ENCODE measurements at regions of chr18 and their contacts with region 1.

Region 1: DNA sequence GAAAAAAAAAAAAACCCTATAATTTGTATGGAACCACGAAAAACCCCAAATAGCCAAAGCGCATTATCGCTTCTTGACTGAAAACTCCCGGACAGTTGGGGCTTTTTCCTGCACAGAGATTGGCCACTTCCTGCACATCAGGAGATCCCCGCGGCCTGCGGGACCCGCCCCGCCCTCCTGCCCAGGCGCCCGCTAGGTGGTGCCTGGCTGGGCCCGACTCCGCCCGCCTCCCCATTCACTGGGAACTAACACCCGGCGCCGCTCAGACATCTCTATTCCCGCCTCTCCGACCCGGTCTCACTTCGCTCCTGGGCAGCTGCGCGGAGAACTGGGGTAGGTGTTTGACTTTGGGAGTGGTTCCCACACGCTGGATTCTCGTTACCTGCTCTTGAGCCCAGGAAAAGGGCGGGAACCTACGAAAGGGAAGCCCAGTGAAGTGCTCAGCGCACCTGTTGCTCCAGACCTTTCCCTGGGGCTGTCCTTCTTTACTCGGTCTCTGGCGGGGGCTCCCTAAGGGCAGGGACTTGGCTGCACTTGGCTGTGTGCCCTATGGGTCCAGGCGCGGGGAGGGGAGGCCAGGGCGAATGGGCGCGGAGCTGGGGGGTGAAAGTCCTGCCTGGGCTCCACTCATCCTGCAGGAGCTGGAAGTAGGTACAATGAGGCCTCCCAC is at the start of gene HMSD:
- DNase-seq: peak; percentile 87
- ATAC-seq: peak; percentile 87
- H3K4me3 Mint-ChIP-seq: peak within 1 kb of the TSS; percentile 77
- H3K27ac Mint-ChIP-seq: peak within 1 kb of the TSS; percentile 86
- H3K4me1 Mint-ChIP-seq: peaks cover 43% of the 10 kb centered on the region
- H3K27me3 Mint-ChIP-seq: peaks cover 27% of the 10 kb centered on the region
- total RNA-seq, gene HMSD: 18.8 to 26.7 TPM

Region 2: GRCh38 chr18:63409301-63409700 is 539.9 kb before region 1 on chr18:
- CTCF ChIA-PET with region 1: no interaction called
- POLR2A ChIA-PET with region 1: no interaction called
- intact Hi-C with region 1: no loop called
- DNase-seq: peak; percentile 19
- ATAC-seq: peak; percentile 57
- H3K4me3 Mint-ChIP-seq: no peak overlapping the region
- H3K27ac Mint-ChIP-seq: peak overlapping the region; percentile 65
- H3K4me1 Mint-ChIP-seq: peaks cover 42% of the 10 kb centered on the region
- H3K27me3 Mint-ChIP-seq: no peaks in the 10 kb centered on the region

Region 3: DNA sequence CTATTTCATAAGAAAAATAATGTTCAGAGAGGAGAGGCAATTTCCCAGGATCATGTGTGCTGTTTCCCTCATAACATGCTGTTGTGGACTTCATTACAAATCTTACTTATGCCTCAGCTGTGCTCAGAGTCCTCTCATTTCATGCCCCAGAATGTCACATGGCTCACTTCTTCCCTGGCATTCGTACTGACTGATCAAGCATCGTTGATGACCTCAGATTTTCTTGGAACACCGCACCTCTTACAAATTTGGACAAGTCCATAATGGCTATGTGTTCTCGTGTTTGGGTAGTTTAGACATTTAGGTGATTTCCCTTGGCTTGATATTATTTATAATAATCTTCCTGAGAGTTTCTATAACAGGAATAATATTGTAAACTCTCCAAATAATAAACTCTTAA is 141.1 kb before region 1 on chr18:
- CTCF ChIA-PET with region 1: no interaction called
- POLR2A ChIA-PET with region 1: no interaction called
- intact Hi-C with region 1: no loop called
- DNase-seq: no peak
- ATAC-seq: no peak
- H3K4me3 Mint-ChIP-seq: no peak overlapping the region
- H3K27ac Mint-ChIP-seq: no peak overlapping the region
- H3K4me1 Mint-ChIP-seq: no peaks in the 10 kb centered on the region
- H3K27me3 Mint-ChIP-seq: peaks cover 12% of the 10 kb centered on the region

Region 4: GRCh38 chr18:63831080-63831788 is 118.0 kb before region 1 on chr18:
- CTCF ChIA-PET with region 1: no interaction called
- POLR2A ChIA-PET with region 1: no interaction called
- intact Hi-C with region 1: loop called (anchors 1 to 2 kb)
- DNase-seq: no peak
- ATAC-seq: no peak
- H3K4me3 Mint-ChIP-seq: no peak overlapping the region
- H3K27ac Mint-ChIP-seq: no peak overlapping the region
- H3K4me1 Mint-ChIP-seq: no peaks in the 10 kb centered on the region
- H3K27me3 Mint-ChIP-seq: peaks cover 23% of the 10 kb centered on the region

Region 5: DNA sequence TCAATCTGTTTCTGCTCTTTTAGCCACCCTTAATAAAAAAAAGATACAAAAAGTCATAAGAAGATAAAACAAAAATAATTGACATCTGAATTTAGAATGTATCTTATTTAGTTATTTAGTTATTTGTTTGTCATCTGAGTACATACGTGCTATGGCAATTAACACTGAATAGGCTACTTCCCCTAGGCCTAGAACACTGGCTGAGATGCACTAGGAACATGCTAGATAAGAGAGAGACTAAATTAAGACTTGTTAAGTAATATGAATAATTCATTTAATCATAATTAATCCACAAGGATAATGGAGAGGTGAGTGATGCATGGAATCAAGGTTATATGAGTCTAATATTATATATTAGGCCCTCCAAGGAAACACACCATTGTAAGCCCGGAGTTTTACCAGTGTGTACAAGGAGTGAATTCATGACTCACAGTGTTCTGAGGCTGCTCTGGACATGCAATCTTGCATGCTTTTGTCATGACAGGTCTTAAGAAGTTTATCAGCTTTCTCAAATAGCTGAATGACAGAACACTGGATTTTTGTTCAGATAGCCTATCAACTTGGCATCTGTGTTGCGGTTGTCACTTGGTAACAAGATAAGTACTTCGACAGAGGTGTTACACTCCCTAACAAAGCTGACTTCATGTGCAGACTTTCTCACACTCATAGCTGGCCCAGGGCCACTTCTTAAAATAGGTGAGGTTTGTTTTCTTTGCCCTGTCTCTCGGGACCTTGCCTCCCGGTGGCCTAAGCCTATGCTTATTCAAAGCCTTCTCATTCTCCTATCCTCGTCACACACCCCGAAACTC is 66.7 kb before region 1 on chr18:
- CTCF ChIA-PET with region 1: interaction called, 3 read pairs
- POLR2A ChIA-PET with region 1: no interaction called
- intact Hi-C with region 1: loop called (anchors 2 to 5 kb)
- DNase-seq: no peak
- ATAC-seq: peak; percentile 24
- H3K4me3 Mint-ChIP-seq: no peak overlapping the region
- H3K27ac Mint-ChIP-seq: no peak overlapping the region
- H3K4me1 Mint-ChIP-seq: peaks cover 12% of the 10 kb centered on the region
- H3K27me3 Mint-ChIP-seq: peaks cover 5% of the 10 kb centered on the region

Region 6: GRCh38 chr18:63963615-63964256 is 14.5 kb after region 1 on chr18:
- CTCF ChIA-PET with region 1: interaction called, 19 read pairs
- POLR2A ChIA-PET with region 1: no interaction called
- intact Hi-C with region 1: loop called in 1 of 2 experiments (anchors 1 kb)
- DNase-seq: peak; percentile 65
- ATAC-seq: peak; percentile 81
- H3K4me3 Mint-ChIP-seq: no peak overlapping the region
- H3K27ac Mint-ChIP-seq: no peak overlapping the region
- H3K4me1 Mint-ChIP-seq: peaks cover 7% of the 10 kb centered on the region
- H3K27me3 Mint-ChIP-seq: peaks cover 16% of the 10 kb centered on the region

Region 7: DNA sequence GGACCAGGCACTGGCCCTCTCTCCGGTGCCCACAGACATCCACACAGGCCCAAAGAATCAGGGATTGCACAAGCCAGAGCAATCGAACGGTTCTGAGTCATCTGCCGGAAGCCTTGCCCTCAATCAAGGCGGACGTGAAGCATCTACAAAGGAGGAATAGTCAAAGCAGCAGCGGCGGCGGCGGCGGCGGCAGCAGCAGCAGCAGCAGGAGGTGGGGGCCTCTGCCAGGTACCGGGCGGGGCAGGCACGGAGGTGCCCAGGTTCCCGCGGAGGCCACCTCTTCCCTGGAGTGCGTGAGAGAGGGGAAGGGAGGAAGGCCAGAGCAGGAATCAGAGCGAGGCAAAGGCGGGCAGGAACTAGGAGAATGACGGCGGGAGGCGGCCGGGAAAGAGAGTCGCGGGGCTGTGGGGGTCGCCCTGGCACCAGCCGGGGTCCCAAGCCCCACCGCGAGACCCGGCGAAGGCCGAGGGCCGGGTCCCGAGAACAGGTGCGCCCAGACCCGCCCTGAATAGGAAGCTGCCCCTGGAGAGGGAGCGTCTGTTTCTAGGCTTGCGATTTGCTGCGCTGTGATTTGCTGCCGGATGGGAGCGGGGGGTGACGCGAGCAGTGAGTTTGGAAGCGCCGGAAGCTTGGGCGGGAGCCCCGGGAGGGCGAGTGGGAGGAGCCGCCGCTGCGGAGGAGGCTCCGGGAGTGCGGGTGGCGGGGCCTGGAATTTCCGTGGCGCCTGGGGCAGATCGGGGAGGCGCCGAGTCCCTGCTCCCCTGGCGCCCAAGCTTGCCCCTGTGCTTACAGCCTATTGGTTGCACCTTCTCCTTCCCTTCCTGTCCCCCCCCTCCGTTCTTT is 21.0 kb after region 1 on chr18 and contains the start of gene SERPINB8:
- CTCF ChIA-PET with region 1: no interaction called
- POLR2A ChIA-PET with region 1: interaction called, 5 read pairs
- intact Hi-C with region 1: loop called (anchors 1 to 2 kb)
- DNase-seq: peak; percentile 92
- ATAC-seq: peak; percentile 90
- H3K4me3 Mint-ChIP-seq: peak within 1 kb of the TSS; percentile 85
- H3K27ac Mint-ChIP-seq: peak within 1 kb of the TSS; percentile 92
- H3K4me1 Mint-ChIP-seq: peaks cover 38% of the 10 kb centered on the region
- H3K27me3 Mint-ChIP-seq: no peaks in the 10 kb centered on the region
- total RNA-seq, gene SERPINB8: 16.0 to 17.1 TPM